Ovary (tissue), 10 donors: ENCODE measurements at regions of chr10 and their contacts with region 1.

Region 1: GRCh38 chr10:121734589-121735045 is 136.4 kb upstream of the FGFR2 start:
- DNase-seq: peak in 2 of 5 donors; percentile 23 to 42
- H3K4me3 ChIP-seq: no peak overlapping the region
- H3K27ac ChIP-seq: no peak overlapping the region
- H3K4me1 ChIP-seq: no peaks in the 10 kb centered on the region
- H3K27me3 ChIP-seq: no peaks in the 10 kb centered on the region
- CTCF ChIP-seq: peak; percentile 29 to 30 (median 30)
- EP300 ChIP-seq: no peak
- POLR2A ChIP-seq: no peak

Region 2: GRCh38 chr10:120942806-120943413 is 791.7 kb before region 1 on chr10:
- intact Hi-C with region 1: loop called (anchors 2 to 10 kb)
- DNase-seq: peak; percentile 76 to 87 (median 81)
- H3K4me3 ChIP-seq: no peak overlapping the region
- H3K27ac ChIP-seq: no peak overlapping the region
- H3K4me1 ChIP-seq: no peaks in the 10 kb centered on the region
- H3K27me3 ChIP-seq: no peaks in the 10 kb centered on the region
- CTCF ChIP-seq: peak; percentile 74 to 88 (median 77)
- EP300 ChIP-seq: no peak
- POLR2A ChIP-seq: no peak

Region 3: DNA sequence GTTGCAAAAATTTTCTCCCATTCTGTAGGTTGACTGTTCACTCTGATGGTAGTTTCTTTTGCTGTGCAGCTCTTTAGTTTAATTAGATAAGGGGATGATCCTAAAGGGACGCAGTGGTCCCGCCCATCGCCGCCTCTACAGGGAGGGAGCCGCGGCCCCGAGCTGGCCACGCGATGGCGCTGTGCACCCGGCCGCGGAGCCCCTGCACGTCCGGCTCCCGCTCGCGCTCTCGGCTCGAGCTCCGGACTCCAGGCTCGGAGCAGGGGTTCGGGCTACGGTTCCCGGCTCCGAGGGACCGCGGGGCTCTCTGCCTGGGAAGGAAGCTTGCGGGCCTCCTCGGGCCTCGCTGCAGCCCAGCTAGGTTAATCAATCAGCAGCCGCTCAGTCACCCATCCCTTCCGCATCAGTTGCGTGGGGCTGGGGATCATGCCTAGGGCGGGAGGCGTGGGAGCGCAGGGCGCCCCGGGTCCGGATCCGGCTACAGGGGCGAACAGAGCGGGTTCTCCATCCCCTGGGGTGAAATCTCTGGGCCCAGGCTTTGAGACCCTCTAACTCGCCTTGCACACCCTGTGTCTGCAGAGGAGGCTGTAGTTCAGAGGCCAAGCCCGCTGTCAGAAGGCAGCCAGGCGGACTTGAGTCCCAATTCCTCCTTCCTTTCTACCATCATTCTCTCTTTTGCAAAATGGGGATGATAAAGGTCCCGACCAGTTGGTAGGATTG is 785.6 kb before region 1 on chr10:
- intact Hi-C with region 1: loop called (anchors 2 to 10 kb)
- DNase-seq: peak; percentile 60 to 88 (median 73)
- H3K4me3 ChIP-seq: peak overlapping the region; percentile 35
- H3K27ac ChIP-seq: no peak overlapping the region
- H3K4me1 ChIP-seq: peaks cover 3% of the 10 kb centered on the region
- H3K27me3 ChIP-seq: no peaks in the 10 kb centered on the region
- CTCF ChIP-seq: peak; percentile 66 to 92 (median 70)
- EP300 ChIP-seq: no peak
- POLR2A ChIP-seq: no peak

Region 4: DNA sequence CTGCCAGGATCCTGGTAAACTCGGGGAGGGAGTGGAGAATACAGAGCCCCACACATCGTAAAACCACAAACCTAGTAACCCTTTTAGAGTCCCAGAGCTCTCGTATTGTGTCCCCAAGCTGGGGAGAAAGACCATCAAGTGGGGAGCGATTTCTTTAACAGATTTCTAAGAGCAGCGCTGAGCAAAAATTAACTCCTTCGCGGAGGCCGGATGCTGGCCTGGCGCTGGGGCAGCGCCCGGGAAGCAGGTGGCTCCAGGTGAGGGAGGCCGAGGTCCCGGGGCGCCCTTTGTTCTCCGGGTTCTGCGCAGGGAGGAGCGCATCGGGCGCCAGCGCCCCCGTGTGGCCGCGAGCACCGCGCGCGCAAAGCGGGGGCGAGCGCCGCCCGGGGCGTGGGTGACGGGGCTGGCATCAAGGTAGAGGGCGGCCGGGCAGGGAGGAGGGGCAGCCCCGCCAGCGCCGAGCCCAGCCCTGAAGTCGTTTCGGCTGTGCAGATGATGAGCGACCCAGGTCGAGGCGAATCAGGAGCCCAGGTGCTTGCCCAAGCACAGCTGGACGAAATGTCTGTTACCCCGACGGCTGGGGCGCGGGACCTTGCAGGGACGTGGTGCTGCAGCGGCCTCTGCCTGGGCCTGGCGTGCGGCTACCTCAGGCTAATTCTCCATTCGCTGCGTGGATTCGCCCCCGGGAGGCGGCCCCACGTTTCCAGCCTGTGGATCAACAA is 126.0 kb before region 1 on chr10:
- intact Hi-C with region 1: loop called in 1 of 4 experiments (anchors 5 kb)
- DNase-seq: peak; percentile 38 to 75 (median 56)
- H3K4me3 ChIP-seq: peak overlapping the region; percentile 30
- H3K27ac ChIP-seq: no peak overlapping the region
- H3K4me1 ChIP-seq: peaks cover 2% of the 10 kb centered on the region
- H3K27me3 ChIP-seq: no peaks in the 10 kb centered on the region
- CTCF ChIP-seq: peak; percentile 86 to 90 (median 89)
- EP300 ChIP-seq: no peak
- POLR2A ChIP-seq: no peak

Region 5: DNA sequence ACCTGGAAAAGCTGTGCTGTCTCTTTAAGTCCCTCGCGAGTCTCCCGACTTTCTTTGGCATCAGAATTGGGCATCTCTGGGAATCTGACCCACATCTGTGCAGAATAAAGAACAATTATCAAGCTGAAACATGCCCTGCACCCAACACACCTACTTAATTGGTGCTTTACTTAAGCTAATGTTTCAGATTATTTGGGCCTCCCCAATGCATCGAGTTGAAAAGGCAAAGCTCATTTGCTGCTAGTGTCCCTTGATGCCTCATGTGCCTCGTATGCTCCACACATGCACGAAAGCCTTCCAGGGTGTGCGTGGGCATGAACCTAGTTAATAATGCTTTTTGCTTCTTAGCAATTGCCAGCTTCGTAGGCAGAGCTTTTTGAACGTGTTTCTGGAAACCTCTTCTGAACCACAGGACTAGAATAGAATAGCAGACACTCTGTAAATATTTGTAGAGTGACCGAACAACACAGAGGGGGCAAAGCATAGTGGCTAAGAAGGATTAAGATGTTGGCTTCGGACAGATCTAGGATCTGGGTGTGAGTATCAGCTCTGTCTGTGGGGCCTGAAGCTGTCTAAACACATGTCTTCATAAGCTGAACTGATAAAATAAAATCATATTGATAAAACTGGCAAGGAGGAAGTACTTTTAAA is 109.7 kb before region 1 on chr10:
- intact Hi-C with region 1: loop called in 1 of 4 experiments (anchors 5 kb)
- DNase-seq: no peak
- H3K4me3 ChIP-seq: no peak overlapping the region
- H3K27ac ChIP-seq: no peak overlapping the region
- H3K4me1 ChIP-seq: no peaks in the 10 kb centered on the region
- H3K27me3 ChIP-seq: no peaks in the 10 kb centered on the region
- CTCF ChIP-seq: no peak
- EP300 ChIP-seq: no peak
- POLR2A ChIP-seq: no peak